ENCODE measurements at regions of chr1 and their contacts with region 1.

Region 1: DNA sequence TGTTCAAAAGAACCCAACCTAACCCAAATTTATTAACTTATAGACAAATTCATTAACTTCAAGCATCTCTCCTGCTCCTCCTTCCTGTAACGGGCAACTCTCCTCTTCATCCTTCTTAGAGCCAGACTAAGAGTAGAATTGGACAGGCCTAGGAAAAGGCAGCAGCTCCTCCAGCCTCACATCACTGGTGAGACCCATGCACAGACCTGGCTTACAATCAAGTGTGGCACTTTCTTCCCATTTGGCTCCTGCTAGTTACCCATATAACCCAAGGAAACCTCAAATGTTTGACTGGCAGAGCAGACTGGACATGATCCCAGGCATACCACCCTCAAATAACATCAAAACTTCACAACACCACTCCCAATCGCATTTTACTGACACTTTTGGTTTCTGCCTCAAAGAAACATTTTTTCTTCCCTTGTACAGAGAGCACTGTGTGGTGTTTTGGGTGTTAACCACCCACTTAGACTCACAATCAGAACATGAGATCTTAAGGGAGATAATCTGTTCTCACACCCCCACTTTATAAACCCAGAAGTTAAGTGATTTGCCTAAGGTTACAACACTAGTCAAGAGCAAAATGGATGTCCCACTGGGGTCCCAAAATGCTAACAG is 101.4 kb downstream of the SIPA1L2 start:
- DNase-seq: peak in 1 of 2 donors; percentile 56
- ATAC-seq: peak; percentile 89 to 99 (median 91)
- H3K4me3 ChIP-seq: no peak overlapping the region
- H3K4me3 Mint-ChIP-seq: peak overlapping the region; percentile 61
- H3K27ac ChIP-seq: peak overlapping the region; percentile 17
- H3K27ac Mint-ChIP-seq: peak overlapping the region; percentile 41 to 69
- H3K4me1 ChIP-seq: peaks cover 19% of the 10 kb centered on the region
- H3K4me1 Mint-ChIP-seq: peaks cover 16 to 21% of the 10 kb centered on the region in 2 donors
- H3K27me3 ChIP-seq: peaks cover 6% of the 10 kb centered on the region
- H3K27me3 Mint-ChIP-seq: peaks cover 24 to 37% of the 10 kb centered on the region in 2 donors
- CTCF ChIP-seq: no peak

Region 2: GRCh38 chr1:232459087-232459486 is 69.5 kb before region 1 on chr1:
- intact Hi-C with region 1: loop called (anchors 2 kb)
- DNase-seq: peak in 1 of 2 donors; percentile 28
- ATAC-seq: peak in 2 of 3 donors; percentile 53 to 62
- H3K4me3 ChIP-seq: no peak overlapping the region
- H3K4me3 Mint-ChIP-seq: peak overlapping the region; percentile 30
- H3K27ac ChIP-seq: no peak overlapping the region
- H3K27ac Mint-ChIP-seq: no peak overlapping the region
- H3K4me1 ChIP-seq: peaks cover 4% of the 10 kb centered on the region
- H3K4me1 Mint-ChIP-seq: peaks cover 23 to 27% of the 10 kb centered on the region in 2 donors
- H3K27me3 ChIP-seq: no peaks in the 10 kb centered on the region
- H3K27me3 Mint-ChIP-seq: peaks cover 9 to 11% of the 10 kb centered on the region in 2 donors
- CTCF ChIP-seq: no peak

Measured in natural killer cell (primary cell).